Activated CD8-positive, alpha-beta T cell treated with anti-CD3 and anti-CD28 coated beads for 36 hours (primary cell): ENCODE measurements at regions of chr13 and their contacts with region 1.

Region 1: GRCh38 chr13:50081679-50082425 is 66.6 kb downstream of the KCNRG start:
- DNase-seq: peak; percentile 99
- ATAC-seq: peak; percentile 81
- H3K4me3 Mint-ChIP-seq: peak overlapping the region; percentile 93
- H3K27ac Mint-ChIP-seq: peak overlapping the region; percentile 98
- H3K4me1 Mint-ChIP-seq: peaks cover 28% of the 10 kb centered on the region
- H3K27me3 Mint-ChIP-seq: peaks cover 5% of the 10 kb centered on the region
- CTCF ChIP-seq: no peak

Region 2: GRCh38 chr13:49976314-49977258 is 105.3 kb before region 1 on chr13:
- CTCF ChIA-PET with region 1: interaction called, 14 read pairs
- POLR2A ChIA-PET with region 1: interaction called, 3 read pairs
- intact Hi-C with region 1: no loop called
- DNase-seq: peak; percentile 83
- ATAC-seq: peak; percentile 85
- H3K4me3 Mint-ChIP-seq: no peak overlapping the region
- H3K27ac Mint-ChIP-seq: no peak overlapping the region
- H3K4me1 Mint-ChIP-seq: peaks cover 2% of the 10 kb centered on the region
- H3K27me3 Mint-ChIP-seq: no peaks in the 10 kb centered on the region
- CTCF ChIP-seq: peak; percentile 89

Region 3: DNA sequence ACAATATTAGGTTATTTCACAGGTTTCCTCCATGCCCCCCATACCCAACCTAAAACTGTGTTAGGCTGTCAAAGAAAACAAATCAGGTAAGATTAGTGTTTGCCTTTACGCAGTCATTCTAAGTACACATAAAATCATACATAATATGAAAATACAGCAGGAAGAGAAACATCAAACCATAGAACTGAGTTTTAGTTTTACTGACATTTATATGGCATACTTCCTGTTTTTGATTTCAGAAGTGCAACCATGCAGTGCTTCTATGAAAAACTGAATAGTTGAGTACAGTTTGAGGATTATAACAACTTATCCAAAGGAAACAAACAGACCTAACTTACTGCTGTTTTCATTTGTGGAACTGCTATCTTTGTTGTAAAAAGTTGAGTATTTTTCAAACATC is 24.7 kb after region 1 on chr13:
- CTCF ChIA-PET with region 1: interaction called, 11 read pairs
- POLR2A ChIA-PET with region 1: interaction called, 3 read pairs
- intact Hi-C with region 1: no loop called
- DNase-seq: no peak
- ATAC-seq: peak; percentile 72
- H3K4me3 Mint-ChIP-seq: peak overlapping the region; percentile 4
- H3K27ac Mint-ChIP-seq: peak overlapping the region; percentile 86
- H3K4me1 Mint-ChIP-seq: peaks cover 42% of the 10 kb centered on the region
- H3K27me3 Mint-ChIP-seq: no peaks in the 10 kb centered on the region
- CTCF ChIP-seq: no peak

Region 4: DNA sequence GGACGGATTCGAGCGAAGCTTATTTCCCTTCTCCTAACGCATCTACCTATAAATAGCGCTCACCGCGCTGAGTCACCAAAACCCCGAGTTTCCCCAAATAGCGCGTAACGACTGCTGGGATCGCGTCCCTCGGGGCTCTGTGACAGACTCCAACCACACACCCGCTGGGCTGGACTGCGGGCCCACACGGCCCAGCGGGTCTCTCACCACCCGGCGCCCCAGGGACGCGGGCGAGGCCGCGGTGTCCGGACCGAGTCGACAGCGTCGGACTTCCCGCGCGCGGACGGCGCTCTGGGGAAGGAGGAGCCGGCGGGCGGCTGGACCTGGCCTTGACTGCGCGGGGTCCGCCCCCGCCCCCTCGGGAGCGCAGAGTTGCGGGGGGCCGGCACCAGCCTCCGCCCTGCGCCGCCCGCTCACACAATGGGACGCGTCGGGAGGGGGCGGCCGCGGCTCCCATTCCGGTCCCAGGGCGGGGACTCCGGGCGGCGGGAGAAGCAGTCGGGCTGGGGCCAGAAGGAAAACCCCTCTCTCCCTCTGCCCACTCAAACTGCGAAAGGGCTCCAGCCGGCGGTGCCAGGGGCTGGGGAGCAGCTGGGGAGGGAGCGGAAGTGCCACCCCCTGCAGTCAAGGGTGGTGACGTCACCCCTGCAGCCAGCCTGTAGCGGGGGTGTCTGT is 42.1 kb after region 1 on chr13:
- CTCF ChIA-PET with region 1: interaction called, 82 read pairs
- POLR2A ChIA-PET with region 1: interaction called, 79 read pairs
- intact Hi-C with region 1: loop called (anchors 1 kb)
- DNase-seq: peak; percentile 95
- ATAC-seq: peak; percentile 72
- H3K4me3 Mint-ChIP-seq: peak overlapping the region; percentile 80
- H3K27ac Mint-ChIP-seq: peak overlapping the region; percentile 88
- H3K4me1 Mint-ChIP-seq: peaks cover 44% of the 10 kb centered on the region
- H3K27me3 Mint-ChIP-seq: peaks cover 13% of the 10 kb centered on the region
- CTCF ChIP-seq: no peak

Region 5: GRCh38 chr13:50801087-50801931 is 719.5 kb after region 1 on chr13:
- CTCF ChIA-PET with region 1: interaction called, 13 read pairs
- POLR2A ChIA-PET with region 1: no interaction called
- intact Hi-C with region 1: loop called (anchors 10 kb)
- DNase-seq: peak; percentile 71
- ATAC-seq: peak; percentile 98
- H3K4me3 Mint-ChIP-seq: no peak overlapping the region
- H3K27ac Mint-ChIP-seq: no peak overlapping the region
- H3K4me1 Mint-ChIP-seq: peaks cover 9% of the 10 kb centered on the region
- H3K27me3 Mint-ChIP-seq: no peaks in the 10 kb centered on the region
- CTCF ChIP-seq: peak; percentile 71